Posterior cingulate gyrus (tissue), 11 donors: ENCODE measurements at regions of chr12 and their contacts with region 1.

Region 1: GRCh38 chr12:96985480-96986362 is 78.7 kb downstream of the NEDD1 start:
- DNase-seq: peak in 4 of 10 donors; percentile 14 to 86 (median 53)

Region 2: DNA sequence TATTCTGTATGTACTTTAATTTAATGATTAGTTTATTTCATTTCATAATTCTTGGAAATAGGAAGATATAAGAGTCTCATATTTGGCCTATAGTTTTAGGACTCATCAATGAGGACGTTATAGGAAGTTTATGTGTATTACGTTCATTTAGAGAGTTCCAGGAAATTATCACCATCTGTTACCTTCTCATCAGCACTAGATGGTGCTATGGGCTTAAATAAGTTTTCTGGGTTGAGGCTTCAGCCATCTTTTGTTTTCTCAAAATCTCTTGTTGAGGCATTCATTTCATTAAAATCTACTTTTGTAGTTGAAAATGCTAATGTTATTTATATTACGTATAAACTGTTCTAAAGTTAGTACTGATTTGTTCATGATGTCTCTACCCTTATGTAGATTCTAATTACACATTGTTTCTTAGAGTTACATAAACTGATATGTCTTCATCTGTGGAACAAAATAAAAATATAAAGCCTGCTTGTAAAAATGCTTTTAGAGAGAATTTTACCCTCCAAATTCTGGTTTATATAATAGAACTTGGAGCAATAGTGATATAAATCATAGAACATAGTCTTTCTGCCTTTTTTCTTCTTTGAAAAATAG is 407.1 kb before region 1 on chr12:
- intact Hi-C with region 1: loop called (anchors 1 kb)
- DNase-seq: no peak

Region 3: GRCh38 chr12:96902076-96902475 is 83.6 kb before region 1 on chr12:
- intact Hi-C with region 1: no loop called
- DNase-seq: no peak

Region 4: DNA sequence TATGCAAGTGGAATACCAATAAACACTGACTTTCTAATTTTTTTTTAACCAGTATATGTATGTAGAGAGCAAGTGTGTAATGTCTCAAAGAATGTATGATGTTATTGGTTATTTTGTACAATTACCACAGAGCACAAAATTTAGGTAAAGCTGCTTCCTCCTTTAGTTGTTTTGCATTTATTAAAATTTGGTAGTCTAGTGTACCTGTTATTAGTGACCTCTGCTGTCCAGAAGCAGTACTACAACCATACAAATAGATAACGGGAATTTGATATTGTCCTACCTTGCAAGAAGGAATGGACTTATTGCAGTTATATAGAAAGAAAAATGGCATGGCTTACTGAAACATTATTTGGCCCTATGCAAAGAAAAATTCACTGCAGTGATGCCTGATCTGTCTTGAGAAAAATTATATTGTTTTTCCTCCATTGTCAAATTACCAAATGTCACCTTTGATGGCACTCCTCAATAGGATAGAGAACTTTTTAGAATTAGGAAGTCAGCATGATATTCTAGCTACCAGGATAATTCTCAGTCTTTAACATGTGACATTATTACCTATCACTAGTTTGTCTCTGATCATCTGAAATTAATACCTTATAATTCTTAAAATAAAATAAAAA is 323.0 kb after region 1 on chr12:
- intact Hi-C with region 1: loop called (anchors 2 kb)
- DNase-seq: no peak

Region 5: DNA sequence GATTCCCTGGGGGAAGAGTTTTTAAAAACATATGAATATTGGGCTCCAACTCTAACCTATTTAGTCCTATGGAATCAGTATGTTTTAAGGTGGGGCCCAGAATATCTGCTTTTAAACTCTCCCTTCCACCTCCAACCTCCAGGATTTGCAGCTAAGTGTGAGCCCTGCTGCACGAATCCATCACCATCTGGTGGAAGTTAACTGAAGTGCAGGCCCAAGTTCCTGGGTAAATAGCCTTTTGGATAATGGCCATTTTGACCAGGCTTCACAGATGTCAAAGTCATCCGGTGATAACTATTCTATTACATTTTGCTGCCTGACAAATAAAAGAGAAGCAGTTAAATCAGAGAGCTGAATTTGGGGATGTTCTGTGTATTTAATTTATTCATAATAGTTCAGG is 418.8 kb after region 1 on chr12:
- intact Hi-C with region 1: loop called (anchors 5 kb)
- DNase-seq: peak in 6 of 10 donors; percentile 9 to 74 (median 40)

Region 6: GRCh38 chr12:98373025-98373554 is 1387.4 kb after region 1 on chr12:
- intact Hi-C with region 1: loop called (anchors 5 kb)
- DNase-seq: no peak

Region 7: GRCh38 chr12:98397316-98398105 is 1411.8 kb after region 1 on chr12:
- intact Hi-C with region 1: loop called (anchors 5 kb)
- DNase-seq: peak; percentile 57 to 96 (median 84)